HCT116 (cell line): ENCODE measurements at regions of chr13 and their contacts with region 1.

Region 1: GRCh38 chr13:32315238-32316027 is at the starts of genes BRCA2 and ZAR1L:
- DNase-seq: peak; percentile 77
- ATAC-seq: peak; percentile 96
- H3K4me3 ChIP-seq: peak within 1 kb of the TSS; percentile 68 to 82
- H3K27ac ChIP-seq: peak within 1 kb of the TSS; percentile 82
- H3K4me1 ChIP-seq: peaks cover 7 to 16% of the 10 kb centered on the region in 2 experiments
- H3K27me3 ChIP-seq: no peaks in the 10 kb centered on the region
- CTCF ChIP-seq: no peak
- POLR2A ChIP-seq: peak; percentile 86
- RAD21 ChIP-seq: no peak
- total RNA-seq, gene BRCA2: 14.2 TPM
- total RNA-seq, gene ZAR1L: 0.15 TPM

Region 2: DNA sequence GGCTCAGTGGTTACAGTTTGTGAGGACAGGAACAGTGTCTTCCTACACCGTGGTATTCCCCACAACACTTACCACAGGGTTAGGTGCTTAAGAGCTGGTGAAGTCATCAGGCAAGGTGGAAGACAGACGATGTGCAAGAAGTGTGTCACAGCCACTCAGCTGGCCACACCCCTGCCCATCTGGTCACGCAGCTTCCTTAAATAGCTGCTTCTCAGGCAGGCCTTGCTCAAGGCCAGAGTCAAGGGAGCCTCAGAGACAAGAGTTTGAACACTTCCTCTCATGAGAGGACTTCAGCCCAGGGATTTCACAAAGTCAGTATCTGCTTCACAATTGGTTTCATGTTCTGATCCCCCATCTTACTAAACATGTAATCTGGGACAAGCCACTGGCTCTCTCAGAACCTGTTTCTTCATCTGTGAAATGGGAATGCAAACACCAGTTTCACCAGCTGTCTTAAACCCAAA is 364.2 kb before region 1 on chr13:
- CTCF ChIA-PET with region 1: no interaction called
- POLR2A ChIA-PET with region 1: no interaction called
- RAD21 ChIA-PET with region 1: no interaction called
- intact Hi-C with region 1: no loop called
- DNase-seq: no peak
- ATAC-seq: 0 out of 2 replicates have a peak, but pooled peaks have one; percentile 20
- H3K4me3 ChIP-seq: no peak overlapping the region
- H3K27ac ChIP-seq: no peak overlapping the region
- H3K4me1 ChIP-seq: peaks cover 0 to 6% of the 10 kb centered on the region in 2 experiments; a peak in 1 of 4 replicates
- H3K27me3 ChIP-seq: no peaks in the 10 kb centered on the region
- CTCF ChIP-seq: no peak
- POLR2A ChIP-seq: no peak
- RAD21 ChIP-seq: no peak

Region 3: DNA sequence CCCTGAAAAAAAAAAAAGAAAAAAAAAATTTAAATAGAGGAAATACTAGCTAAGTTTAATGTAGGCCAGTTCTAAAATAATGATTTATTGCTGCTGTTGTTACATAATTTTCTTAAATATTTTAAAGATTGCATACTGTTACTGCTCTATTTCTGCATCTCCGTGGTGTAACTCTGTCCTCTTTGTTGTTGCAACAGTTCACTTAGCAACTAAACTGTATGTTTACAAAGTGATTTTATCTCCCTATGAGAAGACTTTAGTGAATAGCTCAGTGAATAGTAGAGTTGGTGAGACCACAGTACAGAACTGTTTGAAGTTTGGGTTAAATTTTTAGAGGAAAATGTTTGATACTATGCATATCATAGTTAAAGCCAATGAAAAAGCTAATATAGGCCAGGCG is 19.2 kb after region 1 on chr13:
- CTCF ChIA-PET with region 1: no interaction called
- POLR2A ChIA-PET with region 1: interaction called, 3 read pairs
- RAD21 ChIA-PET with region 1: no interaction called
- intact Hi-C with region 1: loop called (anchors 2 kb)
- DNase-seq: no peak
- ATAC-seq: no peak
- H3K4me3 ChIP-seq: no peak overlapping the region
- H3K27ac ChIP-seq: no peak overlapping the region
- H3K4me1 ChIP-seq: no peaks in the 10 kb centered on the region
- H3K27me3 ChIP-seq: no peaks in the 10 kb centered on the region
- CTCF ChIP-seq: no peak
- POLR2A ChIP-seq: no peak
- RAD21 ChIP-seq: no peak

Region 4: DNA sequence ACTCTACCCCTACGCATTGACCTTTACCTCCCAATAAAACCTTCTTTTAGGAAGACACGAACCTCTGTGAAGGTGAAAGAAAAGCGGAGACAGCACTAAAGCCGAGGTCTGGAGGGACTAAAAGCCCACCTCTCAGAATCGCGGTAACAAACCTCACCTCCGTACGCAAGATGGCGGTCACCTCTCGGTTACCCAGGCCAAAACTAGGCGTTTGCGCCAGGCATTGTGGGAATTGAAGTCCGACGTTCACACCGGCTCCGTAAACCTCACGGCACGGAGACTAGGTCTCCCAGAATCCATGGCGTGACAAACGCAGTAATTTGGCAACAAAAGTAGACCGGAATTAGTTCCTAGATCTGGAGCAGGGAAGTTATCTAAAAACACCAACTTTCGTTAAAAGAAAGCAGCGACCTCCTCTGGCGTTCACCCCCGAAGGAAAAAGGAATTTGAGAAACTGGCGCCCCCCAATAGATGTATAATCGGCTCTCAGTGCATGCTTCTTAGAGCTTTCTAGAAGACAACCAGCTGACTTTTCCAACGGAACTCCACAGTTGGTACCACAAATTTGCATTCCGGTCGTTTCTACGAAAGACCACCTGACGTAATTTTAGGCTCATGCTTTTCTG is 223.3 kb after region 1 on chr13 and contains the start of gene N4BP2L2:
- CTCF ChIA-PET with region 1: no interaction called
- POLR2A ChIA-PET with region 1: no interaction called
- RAD21 ChIA-PET with region 1: no interaction called
- intact Hi-C with region 1: loop called (anchors 5 kb)
- DNase-seq: peak; percentile 93
- ATAC-seq: peak; percentile 97
- H3K4me3 ChIP-seq: peak within 1 kb of the TSS; percentile 81 to 85
- H3K27ac ChIP-seq: peak within 1 kb of the TSS; percentile 92
- H3K4me1 ChIP-seq: peaks cover 5 to 11% of the 10 kb centered on the region in 2 experiments; a peak in 2 of 4 replicates
- H3K27me3 ChIP-seq: no peaks in the 10 kb centered on the region
- CTCF ChIP-seq: peak; percentile 2 to 65 (median 10); a peak in 3 of 6 replicates
- POLR2A ChIP-seq: peak; percentile 45
- RAD21 ChIP-seq: peak; percentile 25
- total RNA-seq, gene N4BP2L2: 92.7 TPM